SK-N-SH (cell line): ENCODE measurements at regions of chr2 and their contacts with region 1.

Region 1: GRCh38 chr2:43333656-43334144 is 107.3 kb upstream of the ZFP36L2 start:
- DNase-seq: no peak
- H3K4me3 ChIP-seq: no peak overlapping the region
- H3K27ac ChIP-seq: peak overlapping the region; percentile 8 to 56; a peak in 3 of 4 replicates
- H3K4me1 ChIP-seq: peaks cover 9 to 40% of the 10 kb centered on the region in 2 experiments; a peak in 3 of 4 replicates
- H3K27me3 ChIP-seq: no peaks in the 10 kb centered on the region
- CTCF ChIP-seq: no peak
- EP300 ChIP-seq: no peak
- RAD21 ChIP-seq: no peak

Region 2: GRCh38 chr2:42754021-42754775 is 579.5 kb before region 1 on chr2:
- CTCF ChIA-PET with region 1: no interaction called
- POLR2A ChIA-PET with region 1: no interaction called
- DNase-seq: peak; percentile 72
- H3K4me3 ChIP-seq: no peak overlapping the region
- H3K27ac ChIP-seq: peak overlapping the region in 1 of 2 experiments; percentile 25; a peak in 1 of 4 replicates
- H3K4me1 ChIP-seq: peaks cover 0 to 38% of the 10 kb centered on the region in 2 experiments; a peak in 1 of 4 replicates
- H3K27me3 ChIP-seq: no peaks in the 10 kb centered on the region
- CTCF ChIP-seq: no peak
- EP300 ChIP-seq: 0 out of 4 replicates have a peak, but pooled peaks of 1 of the 2 experiments have one; percentile 31
- RAD21 ChIP-seq: no peak

Region 3: DNA sequence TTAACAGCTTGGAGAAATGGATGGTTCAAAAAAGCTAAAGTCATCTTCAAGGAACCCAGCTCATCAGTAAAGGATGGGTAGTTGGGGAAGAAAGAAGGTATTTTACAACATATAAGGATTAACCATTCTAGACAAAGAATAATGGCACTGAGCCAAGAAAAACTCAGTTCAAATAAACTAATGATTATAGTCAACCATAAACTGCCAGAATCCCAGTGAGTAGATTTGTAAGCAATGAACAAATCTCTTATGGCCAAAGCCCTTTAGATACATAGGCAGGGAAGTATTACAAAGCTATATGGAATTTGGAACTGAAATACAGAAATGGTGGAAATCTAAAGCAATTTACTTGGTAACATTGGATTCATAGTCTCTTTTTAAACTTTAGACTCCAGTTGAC is 14.9 kb before region 1 on chr2:
- CTCF ChIA-PET with region 1: interaction called, 22 read pairs
- POLR2A ChIA-PET with region 1: interaction called, 5 read pairs
- DNase-seq: no peak
- H3K4me3 ChIP-seq: no peak overlapping the region
- H3K27ac ChIP-seq: peak overlapping the region; percentile 58 to 99
- H3K4me1 ChIP-seq: peaks cover 23 to 36% of the 10 kb centered on the region in 2 experiments
- H3K27me3 ChIP-seq: no peaks in the 10 kb centered on the region
- CTCF ChIP-seq: no peak
- EP300 ChIP-seq: no peak
- RAD21 ChIP-seq: no peak

Region 4: GRCh38 chr2:43358410-43359201 is 24.9 kb after region 1 on chr2:
- CTCF ChIA-PET with region 1: no interaction called
- POLR2A ChIA-PET with region 1: no interaction called
- DNase-seq: no peak
- H3K4me3 ChIP-seq: no peak overlapping the region
- H3K27ac ChIP-seq: peak overlapping the region in 1 of 2 experiments; percentile 51; a peak in 2 of 4 replicates
- H3K4me1 ChIP-seq: peaks cover 0 to 14% of the 10 kb centered on the region in 2 experiments; a peak in 3 of 4 replicates
- H3K27me3 ChIP-seq: no peaks in the 10 kb centered on the region
- CTCF ChIP-seq: no peak
- EP300 ChIP-seq: no peak
- RAD21 ChIP-seq: no peak

Region 5: GRCh38 chr2:43818761-43819160 is 485.1 kb after region 1 on chr2:
- CTCF ChIA-PET with region 1: no interaction called
- POLR2A ChIA-PET with region 1: no interaction called
- DNase-seq: no peak
- H3K4me3 ChIP-seq: no peak overlapping the region
- H3K27ac ChIP-seq: no peak overlapping the region
- H3K4me1 ChIP-seq: no peaks in the 10 kb centered on the region
- H3K27me3 ChIP-seq: no peaks in the 10 kb centered on the region; the same call in 1 of the 2 replicates
- CTCF ChIP-seq: no peak
- EP300 ChIP-seq: no peak
- RAD21 ChIP-seq: no peak